Naive thymus-derived CD4-positive, alpha-beta T cell (primary cell): ENCODE measurements at regions of chr4 and their contacts with region 1.

Region 1: DNA sequence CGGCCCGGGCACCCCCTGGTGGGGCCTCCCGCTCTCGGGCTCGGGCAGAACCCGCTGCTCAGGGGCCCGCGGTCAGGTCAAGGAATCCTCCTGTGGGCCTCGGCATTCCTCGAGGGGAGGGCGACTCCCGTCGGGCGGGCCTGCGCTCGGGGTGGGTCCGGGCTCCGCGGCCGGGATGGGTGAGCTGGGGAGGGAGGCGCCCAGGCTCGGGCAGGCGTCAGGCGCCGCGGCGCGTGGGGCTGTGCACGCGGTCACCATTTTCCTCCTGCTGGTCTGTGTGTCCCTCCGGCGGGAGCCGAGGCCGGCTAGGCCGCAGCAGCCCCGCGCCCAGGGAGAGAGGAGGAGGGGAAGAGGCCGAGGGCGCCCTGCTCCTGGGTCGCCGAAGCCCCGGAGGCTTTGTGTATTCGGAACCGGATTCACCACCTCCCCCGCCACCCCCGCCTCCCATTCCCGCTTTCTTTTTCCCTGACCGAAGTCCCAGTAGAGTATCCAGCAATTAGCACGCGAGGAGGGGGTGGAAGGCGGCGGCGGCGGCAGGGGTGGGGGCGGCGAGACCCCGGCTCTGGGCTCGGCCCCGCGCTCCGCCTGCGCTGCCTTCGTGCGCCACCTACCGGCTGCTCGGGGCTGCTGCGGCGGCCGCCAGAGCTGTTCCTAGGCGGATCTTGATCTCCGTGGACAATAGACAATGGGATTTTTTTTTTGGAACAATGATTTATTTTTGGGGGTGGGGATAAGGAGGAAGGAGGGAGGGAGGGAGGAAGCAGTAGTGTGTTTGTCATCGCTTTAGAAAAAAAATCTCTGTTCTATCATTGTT is 99.0 kb upstream of the MAML3 start:
- DNase-seq: peak; percentile 29 to 78 (median 60)
- ATAC-seq: peak; percentile 78
- H3K4me3 ChIP-seq: peak overlapping the region; percentile 44
- H3K4me3 Mint-ChIP-seq: peak overlapping the region; percentile 42 to 85 (median 80)
- H3K27ac ChIP-seq: peak overlapping the region; percentile 29
- H3K27ac Mint-ChIP-seq: peak overlapping the region in 2 of 9 donors; percentile 30 to 33
- H3K4me1 ChIP-seq: no peaks in the 10 kb centered on the region
- H3K4me1 Mint-ChIP-seq: peaks cover 2 to 31% (median 11%) of the 10 kb centered on the region in 7 donors
- H3K27me3 ChIP-seq: peaks cover 0 to 7% of the 10 kb centered on the region in 2 donors
- H3K27me3 Mint-ChIP-seq: peaks cover 0 to 19% (median 3%) of the 10 kb centered on the region in 5 donors

Region 2: DNA sequence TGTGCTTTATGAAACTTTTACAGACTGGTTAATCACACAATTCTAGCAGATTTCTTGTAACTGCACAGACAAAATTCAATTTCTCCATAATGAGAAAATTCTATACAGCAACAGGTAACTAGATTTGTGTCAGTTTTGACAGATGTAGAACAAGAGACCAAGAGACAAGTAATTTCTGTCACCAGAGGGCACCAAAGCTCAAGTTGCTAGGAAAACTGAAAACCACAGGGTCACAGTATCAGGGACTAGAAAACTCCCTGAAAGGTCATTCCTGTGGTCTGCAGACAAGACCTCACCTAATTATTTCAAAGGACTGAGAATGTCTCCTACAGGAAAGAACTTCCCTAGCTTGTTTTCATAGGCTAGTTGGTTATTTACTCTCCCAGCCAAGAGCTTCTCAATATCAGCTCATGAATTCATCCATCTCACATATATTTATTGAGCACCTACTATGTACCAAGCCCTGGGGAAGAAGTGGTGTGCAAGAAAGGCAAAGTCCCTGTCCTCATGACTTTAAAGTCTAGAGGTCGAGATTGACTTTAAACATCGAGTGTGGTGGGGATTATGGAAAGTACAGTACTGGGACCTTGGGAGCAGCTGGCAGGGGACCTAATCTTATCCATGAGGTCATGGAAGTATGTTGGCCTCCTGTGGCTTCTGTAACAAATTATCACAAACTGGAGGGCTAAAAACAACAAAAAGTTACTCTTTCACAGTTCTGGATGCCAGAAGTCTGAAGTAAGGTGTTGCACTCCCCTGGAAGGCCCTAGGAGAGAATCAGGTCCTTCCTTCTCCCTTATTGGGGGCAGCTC is 649.2 kb before region 1 on chr4:
- CTCF ChIA-PET with region 1: no interaction called
- POLR2A ChIA-PET with region 1: no interaction called
- intact Hi-C with region 1: loop called (anchors 1 kb)
- DNase-seq: peak in 7 of 9 donors; percentile 5 to 46 (median 33)
- ATAC-seq: peak; percentile 54
- H3K4me3 ChIP-seq: no peak overlapping the region
- H3K4me3 Mint-ChIP-seq: no peak overlapping the region
- H3K27ac ChIP-seq: no peak overlapping the region
- H3K27ac Mint-ChIP-seq: no peak overlapping the region
- H3K4me1 ChIP-seq: no peaks in the 10 kb centered on the region
- H3K4me1 Mint-ChIP-seq: peaks cover 13 to 23% (median 17%) of the 10 kb centered on the region in 7 donors
- H3K27me3 ChIP-seq: no peaks in the 10 kb centered on the region
- H3K27me3 Mint-ChIP-seq: peaks cover 10 to 21% (median 14%) of the 10 kb centered on the region in 5 donors

Region 3: DNA sequence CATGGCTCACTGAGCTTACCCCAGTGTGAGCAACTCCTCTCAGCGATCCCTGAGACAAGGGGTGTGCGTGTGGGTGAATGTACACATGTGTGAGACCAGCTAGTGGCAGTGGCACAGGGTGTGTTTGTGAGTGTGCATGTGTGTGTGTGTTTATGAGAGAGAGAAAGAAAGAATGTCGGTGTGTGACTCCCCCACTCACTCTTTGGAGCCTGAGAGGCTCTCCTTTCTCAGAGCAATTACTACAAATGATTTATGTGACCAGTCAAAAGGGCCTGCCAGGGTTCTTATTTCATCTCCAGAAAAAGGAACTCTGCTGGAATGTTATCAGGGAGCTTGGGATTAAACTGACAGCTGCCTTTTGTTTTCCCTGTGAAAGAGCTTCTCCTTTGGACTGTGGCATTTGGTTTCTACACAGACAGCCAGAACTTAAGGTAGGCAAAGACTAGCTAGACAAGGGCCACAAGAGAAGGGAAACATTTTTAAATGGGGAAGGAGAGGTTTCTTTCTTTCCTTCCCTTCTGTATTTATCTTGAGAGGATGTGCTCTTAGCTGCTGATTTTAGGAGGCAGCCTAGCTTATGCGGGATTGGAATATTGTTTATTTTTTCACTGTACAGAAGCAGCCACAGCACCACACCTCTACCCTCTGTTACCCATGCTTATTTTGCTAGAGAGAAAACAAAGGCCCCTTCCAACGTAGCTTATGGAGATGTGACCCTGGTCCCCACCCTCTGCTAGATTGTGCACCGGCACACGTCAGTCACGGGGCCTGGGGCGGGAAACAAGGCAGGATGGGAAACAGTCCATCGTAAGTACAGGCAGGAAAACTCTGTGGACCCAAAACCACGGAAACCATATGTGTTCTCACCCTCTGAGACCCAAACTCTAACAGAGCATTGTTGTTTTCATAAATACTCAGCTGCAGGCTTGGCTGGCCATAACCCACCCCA is 443.9 kb before region 1 on chr4:
- CTCF ChIA-PET with region 1: no interaction called
- POLR2A ChIA-PET with region 1: no interaction called
- intact Hi-C with region 1: loop called in 1 of 2 experiments (anchors 10 kb)
- DNase-seq: no peak
- ATAC-seq: no peak
- H3K4me3 ChIP-seq: no peak overlapping the region
- H3K4me3 Mint-ChIP-seq: no peak overlapping the region
- H3K27ac ChIP-seq: no peak overlapping the region
- H3K27ac Mint-ChIP-seq: no peak overlapping the region
- H3K4me1 ChIP-seq: no peaks in the 10 kb centered on the region
- H3K4me1 Mint-ChIP-seq: peaks cover 0 to 8% (median 0%) of the 10 kb centered on the region in 7 donors
- H3K27me3 ChIP-seq: no peaks in the 10 kb centered on the region
- H3K27me3 Mint-ChIP-seq: peaks cover 0 to 10% (median 0%) of the 10 kb centered on the region in 5 donors

Region 4: GRCh38 chr4:140049024-140049848 is 203.7 kb before region 1 on chr4:
- CTCF ChIA-PET with region 1: interaction called, 9 read pairs
- POLR2A ChIA-PET with region 1: no interaction called
- intact Hi-C with region 1: loop called (anchors 1 kb)
- DNase-seq: peak in 8 of 9 donors; percentile 13 to 73 (median 61)
- ATAC-seq: peak; percentile 92
- H3K4me3 ChIP-seq: peak overlapping the region; percentile 45
- H3K4me3 Mint-ChIP-seq: peak overlapping the region; percentile 76 to 93 (median 86)
- H3K27ac ChIP-seq: peak overlapping the region; percentile 46
- H3K27ac Mint-ChIP-seq: peak overlapping the region; percentile 77 to 94 (median 82)
- H3K4me1 ChIP-seq: peaks cover 3 to 14% of the 10 kb centered on the region in 2 donors
- H3K4me1 Mint-ChIP-seq: peaks cover 7 to 60% (median 41%) of the 10 kb centered on the region in 7 donors
- H3K27me3 ChIP-seq: no peaks in the 10 kb centered on the region
- H3K27me3 Mint-ChIP-seq: peaks cover 0 to 64% (median 0%) of the 10 kb centered on the region in 5 donors

Region 5: DNA sequence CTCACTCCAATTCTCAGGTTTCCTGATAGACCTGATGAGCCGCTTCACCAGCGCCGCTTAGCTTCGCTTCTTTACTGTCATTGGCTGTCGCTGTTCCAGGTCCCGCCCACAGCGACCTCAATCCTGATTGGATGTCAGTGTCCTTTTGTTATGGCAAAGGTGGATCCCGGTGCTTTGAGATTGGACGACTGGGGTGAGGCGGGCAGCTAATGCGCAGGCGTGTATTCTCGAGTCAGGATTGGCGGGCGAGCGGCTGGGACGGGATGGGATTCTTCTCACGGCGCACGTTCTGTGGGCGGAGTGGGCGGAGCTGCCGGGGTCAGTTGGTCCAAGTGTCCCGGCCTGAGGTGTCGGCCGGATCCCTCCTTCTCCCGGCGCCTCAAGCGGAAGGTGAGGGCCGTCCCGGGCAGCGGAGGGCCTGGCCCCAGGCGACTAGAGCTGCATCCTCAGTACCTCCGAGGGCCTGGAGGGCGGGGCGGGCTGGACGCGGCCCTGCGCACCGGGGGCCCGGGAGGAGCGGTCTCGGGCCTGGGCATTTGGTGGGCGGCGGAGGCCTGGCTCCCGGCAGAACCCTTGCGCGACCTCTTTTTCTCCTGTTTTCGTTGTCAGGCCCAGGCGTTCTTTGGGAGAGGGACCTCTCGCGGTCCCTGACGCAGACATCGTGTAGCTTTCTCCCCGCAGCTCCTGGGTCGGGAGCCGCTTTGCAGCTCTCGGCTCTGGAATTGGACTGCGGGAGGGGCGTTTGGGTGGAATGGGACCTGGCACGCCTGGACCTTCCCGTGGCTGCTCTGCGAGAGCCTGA is 120.6 kb after region 1 on chr4 and contains the start of gene SCOC:
- CTCF ChIA-PET with region 1: no interaction called
- POLR2A ChIA-PET with region 1: no interaction called
- intact Hi-C with region 1: loop called in 1 of 2 experiments (anchors 5 kb)
- DNase-seq: peak; percentile 80 to 98 (median 95)
- ATAC-seq: peak; percentile 98
- H3K4me3 ChIP-seq: peak within 1 kb of the TSS; percentile 79
- H3K4me3 Mint-ChIP-seq: peak within 1 kb of the TSS in 2 of 10 donors; percentile 87 to 90
- H3K27ac ChIP-seq: peak within 1 kb of the TSS; percentile 86
- H3K27ac Mint-ChIP-seq: peak within 1 kb of the TSS in 5 of 9 donors; percentile 47 to 90 (median 51)
- H3K4me1 ChIP-seq: peaks cover 6 to 7% of the 10 kb centered on the region in 2 donors
- H3K4me1 Mint-ChIP-seq: peaks cover 29 to 49% (median 43%) of the 10 kb centered on the region in 7 donors
- H3K27me3 ChIP-seq: no peaks in the 10 kb centered on the region
- H3K27me3 Mint-ChIP-seq: peaks cover 0 to 17% (median 0%) of the 10 kb centered on the region in 5 donors
- total RNA-seq, gene SCOC: 9.3 to 26.3 (median 22.6) TPM

Region 6: GRCh38 chr4:140469791-140470733 is 217.1 kb after region 1 on chr4:
- CTCF ChIA-PET with region 1: no interaction called
- POLR2A ChIA-PET with region 1: no interaction called
- intact Hi-C with region 1: no loop called
- DNase-seq: no peak
- ATAC-seq: no peak
- H3K4me3 ChIP-seq: no peak overlapping the region
- H3K4me3 Mint-ChIP-seq: no peak overlapping the region
- H3K27ac ChIP-seq: no peak overlapping the region
- H3K27ac Mint-ChIP-seq: no peak overlapping the region
- H3K4me1 ChIP-seq: no peaks in the 10 kb centered on the region
- H3K4me1 Mint-ChIP-seq: no peaks in the 10 kb centered on the region
- H3K27me3 ChIP-seq: no peaks in the 10 kb centered on the region
- H3K27me3 Mint-ChIP-seq: peaks cover 26 to 42% (median 35%) of the 10 kb centered on the region in 5 donors